Heart left ventricle (tissue), 16 donors: ENCODE measurements at regions of chr4 and their contacts with region 1.

Region 1: GRCh38 chr4:74932816-74933561 is at the start of gene PARM1:
- DNase-seq: peak; percentile 90 to 95 (median 93)
- ATAC-seq: peak; percentile 86 to 98 (median 95)
- H3K4me3 ChIP-seq: peak within 1 kb of the TSS; percentile 53 to 86 (median 74)
- H3K27ac ChIP-seq: peak within 1 kb of the TSS; percentile 44 to 91 (median 80)
- H3K4me1 ChIP-seq: peaks cover 0 to 29% (median 9%) of the 10 kb centered on the region in 12 donors
- H3K27me3 ChIP-seq: peaks cover 0 to 36% (median 0%) of the 10 kb centered on the region in 9 donors
- CTCF ChIP-seq: peak; percentile 44 to 82 (median 70)
- POLR2A ChIP-seq: peak; percentile 26 to 81
- total RNA-seq, gene PARM1: 40.1 to 144 (median 103) TPM

Region 2: GRCh38 chr4:74531963-74532794 is 400.8 kb before region 1 on chr4:
- intact Hi-C with region 1: no loop called
- DNase-seq: no peak
- ATAC-seq: peak; percentile 68 to 83 (median 76)
- H3K4me3 ChIP-seq: no peak overlapping the region
- H3K27ac ChIP-seq: no peak overlapping the region
- H3K4me1 ChIP-seq: peaks cover 0 to 10% (median 5%) of the 10 kb centered on the region in 12 donors
- H3K27me3 ChIP-seq: no peaks in the 10 kb centered on the region
- CTCF ChIP-seq: peak in 10 of 12 donors; percentile 39 to 67 (median 60)
- POLR2A ChIP-seq: no peak

Region 3: GRCh38 chr4:74969507-74970474 is 36.8 kb after region 1 on chr4:
- intact Hi-C with region 1: loop called in 2 of 10 experiments (anchors 5 kb)
- DNase-seq: peak in 4 of 5 donors; percentile 42 to 70 (median 56)
- ATAC-seq: peak; percentile 90 to 94 (median 94)
- H3K4me3 ChIP-seq: no peak overlapping the region
- H3K27ac ChIP-seq: peak overlapping the region; percentile 36 to 89 (median 76)
- H3K4me1 ChIP-seq: peaks cover 0 to 59% (median 20%) of the 10 kb centered on the region in 12 donors
- H3K27me3 ChIP-seq: no peaks in the 10 kb centered on the region
- CTCF ChIP-seq: peak in 10 of 12 donors; percentile 23 to 61 (median 44)
- POLR2A ChIP-seq: no peak

Region 4: DNA sequence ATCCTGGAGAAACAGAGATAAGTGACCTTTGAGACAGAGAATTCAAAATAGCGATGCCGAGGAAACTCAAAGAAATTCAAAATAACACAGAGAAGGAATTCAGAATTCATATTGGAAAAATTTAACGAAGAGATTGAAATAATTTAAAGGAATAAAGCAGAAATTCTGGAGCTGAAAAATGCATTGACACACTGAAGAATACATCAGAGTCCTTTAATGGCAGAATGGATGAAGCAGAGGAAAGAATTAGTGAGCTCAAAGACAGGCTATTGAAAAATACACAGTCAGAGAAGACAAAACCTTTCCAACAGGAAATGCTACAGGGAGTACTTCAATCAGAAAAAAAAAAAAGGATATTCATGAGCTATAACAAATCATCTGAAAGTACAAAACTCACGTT is 185.8 kb after region 1 on chr4:
- intact Hi-C with region 1: loop called in 7 of 10 experiments (anchors 2 to 5 kb)
- DNase-seq: no peak
- ATAC-seq: no peak
- H3K4me3 ChIP-seq: no peak overlapping the region
- H3K27ac ChIP-seq: no peak overlapping the region
- H3K4me1 ChIP-seq: no peaks in the 10 kb centered on the region
- H3K27me3 ChIP-seq: no peaks in the 10 kb centered on the region
- CTCF ChIP-seq: no peak
- POLR2A ChIP-seq: no peak

Region 5: GRCh38 chr4:75469896-75470295 is 536.9 kb after region 1 on chr4:
- intact Hi-C with region 1: loop called in 5 of 10 experiments (anchors 2 to 10 kb)
- DNase-seq: no peak
- ATAC-seq: no peak
- H3K4me3 ChIP-seq: no peak overlapping the region
- H3K27ac ChIP-seq: no peak overlapping the region
- H3K4me1 ChIP-seq: peaks cover 0 to 10% (median 0%) of the 10 kb centered on the region in 12 donors
- H3K27me3 ChIP-seq: no peaks in the 10 kb centered on the region
- CTCF ChIP-seq: no peak
- POLR2A ChIP-seq: no peak

Region 6: DNA sequence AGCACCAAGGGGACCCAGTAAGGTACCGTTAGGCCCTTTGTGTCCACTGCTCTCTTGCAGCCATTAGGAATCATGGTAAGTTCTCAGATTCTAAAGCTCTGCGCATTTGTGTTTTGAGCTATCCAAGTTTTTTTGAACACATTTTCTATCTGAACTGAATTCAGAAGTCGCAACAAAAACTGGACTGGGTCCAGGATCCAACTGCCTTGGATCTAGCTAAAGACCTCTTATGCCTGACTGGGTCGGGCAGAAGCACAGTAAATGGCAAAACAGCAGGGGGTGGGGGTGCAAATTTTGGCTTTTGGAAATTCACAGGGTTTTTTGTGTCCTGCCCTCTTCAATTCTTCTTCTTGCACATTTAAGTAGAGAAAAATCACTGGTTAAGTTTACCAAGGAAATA is 551.2 kb after region 1 on chr4:
- intact Hi-C with region 1: loop called in 6 of 10 experiments (anchors 10 kb)
- DNase-seq: no peak
- ATAC-seq: no peak
- H3K4me3 ChIP-seq: no peak overlapping the region
- H3K27ac ChIP-seq: no peak overlapping the region
- H3K4me1 ChIP-seq: peaks cover 0 to 7% (median 0%) of the 10 kb centered on the region in 12 donors
- H3K27me3 ChIP-seq: no peaks in the 10 kb centered on the region
- CTCF ChIP-seq: no peak
- POLR2A ChIP-seq: no peak